Mammary epithelial cell (primary cell): ENCODE measurements at regions of chr13 and their contacts with region 1.

Region 1: GRCh38 chr13:30865123-30866049 is 40.7 kb upstream of the MEDAG start:
- DNase-seq: peak; percentile 89
- H3K4me3 ChIP-seq: no peak overlapping the region
- H3K27ac ChIP-seq: peak overlapping the region; percentile 76
- H3K4me1 ChIP-seq: peaks cover 37% of the 10 kb centered on the region
- H3K27me3 ChIP-seq: no peaks in the 10 kb centered on the region
- CTCF ChIP-seq: peak; percentile 96 to 97

Region 2: DNA sequence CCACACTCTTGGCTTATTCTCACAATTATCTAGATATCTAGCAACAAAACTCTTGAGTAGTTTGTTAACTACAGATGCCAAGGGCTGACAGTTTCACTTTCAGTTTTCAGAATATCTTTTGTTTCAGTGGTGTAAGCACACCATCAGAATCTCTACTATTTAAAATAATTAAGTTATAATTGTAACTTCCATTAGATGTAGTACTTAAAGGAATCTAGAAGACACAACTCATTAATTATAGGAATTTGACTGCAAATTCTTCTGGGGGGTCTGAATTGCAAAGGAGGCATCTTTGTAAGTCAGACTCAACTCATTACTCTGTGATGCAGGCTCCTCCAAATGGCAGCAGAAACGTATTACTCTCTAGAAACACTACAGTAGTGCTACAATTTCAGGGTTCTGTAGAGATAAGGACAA is 292.5 kb before region 1 on chr13:
- CTCF ChIA-PET with region 1: no interaction called
- dilution Hi-C with region 1: no loop called
- in situ Hi-C with region 1: no loop called
- intact Hi-C with region 1: loop called (anchors 5 kb)
- DNase-seq: peak; percentile 37
- H3K4me3 ChIP-seq: peak overlapping the region; percentile 31 to 53 (median 46)
- H3K27ac ChIP-seq: peak overlapping the region; percentile 71
- H3K4me1 ChIP-seq: peaks cover 35% of the 10 kb centered on the region
- H3K27me3 ChIP-seq: no peaks in the 10 kb centered on the region
- CTCF ChIP-seq: peak in 1 of 2 donors; percentile 33

Region 3: DNA sequence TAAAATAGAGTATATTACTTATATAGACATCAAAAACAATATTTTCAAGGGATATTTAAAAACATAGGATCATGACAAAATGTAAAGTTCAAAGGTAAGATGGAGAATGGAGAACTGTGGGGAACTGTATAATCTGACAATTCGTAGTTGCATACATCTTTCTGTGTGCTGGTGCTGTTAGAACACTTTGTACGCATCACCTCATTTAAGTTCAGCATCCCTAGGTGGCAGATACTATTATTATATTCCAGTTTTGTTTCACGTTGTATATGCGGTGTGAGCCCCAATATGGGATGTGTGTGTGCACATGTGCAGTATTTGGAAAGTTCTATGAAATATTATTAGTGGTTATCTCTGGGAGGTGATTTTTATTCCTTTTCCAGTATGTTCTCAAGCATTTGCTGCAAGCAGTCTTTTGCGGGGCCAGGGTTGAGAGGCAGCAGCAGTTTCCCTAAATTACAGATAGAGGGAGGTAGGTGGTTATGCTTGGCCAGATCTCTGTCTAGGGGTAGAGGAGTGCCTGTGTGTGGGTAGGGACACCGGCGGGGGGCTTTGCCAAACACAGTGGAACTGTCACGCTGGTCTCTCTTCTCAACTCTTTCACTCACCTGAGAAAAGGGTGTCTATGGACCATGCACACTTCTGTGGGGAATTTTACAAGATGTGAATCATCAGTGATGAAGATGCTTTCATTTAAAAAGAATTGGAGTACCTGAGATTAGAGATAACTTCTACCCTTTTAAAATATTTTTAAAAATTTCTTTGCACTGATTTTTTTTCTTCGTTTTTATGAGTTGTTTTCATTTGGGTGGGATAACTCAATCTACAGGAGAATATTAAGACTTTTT is 185.7 kb before region 1 on chr13:
- CTCF ChIA-PET with region 1: no interaction called
- dilution Hi-C with region 1: no loop called
- in situ Hi-C with region 1: no loop called
- intact Hi-C with region 1: loop called (anchors 1 kb)
- DNase-seq: no peak
- H3K4me3 ChIP-seq: no peak overlapping the region
- H3K27ac ChIP-seq: no peak overlapping the region
- H3K4me1 ChIP-seq: no peaks in the 10 kb centered on the region
- H3K27me3 ChIP-seq: no peaks in the 10 kb centered on the region
- CTCF ChIP-seq: peak; percentile 47 to 78

Region 4: DNA sequence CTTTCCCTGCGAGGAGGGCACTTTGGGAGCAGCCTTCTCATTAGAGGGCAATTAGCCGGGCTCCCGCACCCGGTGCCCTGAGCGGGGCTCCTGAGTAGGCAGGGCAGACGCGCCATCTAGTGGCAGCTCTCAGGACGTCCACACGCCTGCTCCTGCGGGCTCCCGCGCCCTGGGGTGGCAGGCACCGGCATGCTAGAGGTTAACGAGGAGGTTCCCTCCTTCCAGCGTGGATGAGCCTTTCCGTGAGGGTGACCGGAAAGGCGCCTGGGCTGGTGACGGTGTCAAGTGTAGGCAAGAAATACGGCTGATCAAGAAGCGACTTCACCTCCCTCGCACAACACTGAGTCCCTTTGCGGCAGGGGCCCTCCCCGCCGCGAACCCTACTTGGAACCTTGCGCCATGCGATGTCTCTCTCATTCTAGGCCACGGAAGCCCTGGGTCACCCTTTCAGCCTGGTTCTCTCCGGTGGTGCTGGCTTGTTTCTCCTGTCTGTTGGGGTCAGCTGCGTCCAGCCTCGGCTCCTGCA is 62.4 kb before region 1 on chr13:
- CTCF ChIA-PET with region 1: interaction called, 13 read pairs
- dilution Hi-C with region 1: no loop called
- in situ Hi-C with region 1: loop called in 1 of 2 experiments (anchors 10 kb)
- intact Hi-C with region 1: loop called (anchors 1 kb)
- DNase-seq: peak; percentile 77
- H3K4me3 ChIP-seq: peak overlapping the region in 1 of 3 experiments; percentile 40
- H3K27ac ChIP-seq: no peak overlapping the region
- H3K4me1 ChIP-seq: peaks cover 45% of the 10 kb centered on the region
- H3K27me3 ChIP-seq: no peaks in the 10 kb centered on the region
- CTCF ChIP-seq: peak; percentile 76 to 95

Region 5: GRCh38 chr13:30898678-30899241 is 33.4 kb after region 1 on chr13:
- CTCF ChIA-PET with region 1: no interaction called
- dilution Hi-C with region 1: no loop called
- in situ Hi-C with region 1: no loop called
- intact Hi-C with region 1: no loop called
- DNase-seq: peak; percentile 22
- H3K4me3 ChIP-seq: no peak overlapping the region
- H3K27ac ChIP-seq: no peak overlapping the region
- H3K4me1 ChIP-seq: peaks cover 3% of the 10 kb centered on the region
- H3K27me3 ChIP-seq: peaks cover under 1% of the 10 kb centered on the region
- CTCF ChIP-seq: no peak

Region 6: DNA sequence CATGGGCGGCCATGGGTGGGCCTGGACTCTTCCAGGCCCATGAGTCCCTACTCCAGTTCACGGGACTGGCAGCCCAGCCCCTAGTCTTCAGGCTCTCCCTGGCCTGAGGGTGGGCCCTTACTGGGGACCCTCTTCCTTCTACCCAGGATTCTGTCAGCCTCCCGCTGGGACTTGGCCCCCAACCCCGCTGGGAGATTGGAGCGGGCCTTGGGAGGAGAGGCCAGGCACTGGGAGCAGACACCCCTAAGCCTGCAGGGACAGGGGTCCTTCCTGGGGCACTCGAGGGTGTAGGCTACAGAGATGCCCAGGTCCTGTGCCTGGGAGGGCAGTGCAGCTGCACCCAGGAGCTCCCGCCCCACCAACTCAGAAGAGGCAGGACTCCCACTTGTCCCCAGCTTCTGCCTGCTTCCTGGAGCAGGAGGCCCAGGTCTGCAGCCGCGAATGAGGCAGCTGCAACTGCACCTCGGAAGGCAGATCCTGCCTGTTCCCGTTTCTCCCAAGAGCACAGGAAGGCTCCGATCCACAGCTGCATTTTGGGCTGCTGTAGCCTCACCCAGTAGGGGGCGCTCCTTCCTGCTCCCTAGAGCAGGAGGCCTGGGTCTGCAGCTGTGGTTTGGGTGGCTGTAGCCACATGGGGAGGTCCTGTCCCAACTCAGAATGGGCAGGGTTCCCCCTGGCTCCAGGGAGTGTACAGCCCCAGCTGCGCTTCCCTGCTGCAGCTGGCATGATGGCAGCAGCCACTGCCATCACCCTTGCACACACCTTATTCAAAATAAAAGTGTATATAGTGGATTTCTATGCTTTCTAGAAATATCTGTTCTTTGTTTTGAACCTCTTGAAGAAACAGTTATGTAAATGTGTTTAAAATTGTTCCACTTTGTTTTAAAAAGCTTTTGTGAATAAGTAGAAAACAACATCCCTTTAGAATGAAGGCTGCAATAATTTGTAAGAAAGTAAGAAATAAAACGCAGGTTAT is 113.9 kb after region 1 on chr13:
- CTCF ChIA-PET with region 1: interaction called, 7 read pairs
- dilution Hi-C with region 1: no loop called
- in situ Hi-C with region 1: no loop called
- intact Hi-C with region 1: loop called (anchors 1 kb)
- DNase-seq: no peak
- H3K4me3 ChIP-seq: no peak overlapping the region
- H3K27ac ChIP-seq: no peak overlapping the region
- H3K4me1 ChIP-seq: peaks cover 20% of the 10 kb centered on the region
- H3K27me3 ChIP-seq: no peaks in the 10 kb centered on the region
- CTCF ChIP-seq: peak; percentile 38 to 86